ENCODE measurements at regions of chr11 and their contacts with region 1.

Region 1: DNA sequence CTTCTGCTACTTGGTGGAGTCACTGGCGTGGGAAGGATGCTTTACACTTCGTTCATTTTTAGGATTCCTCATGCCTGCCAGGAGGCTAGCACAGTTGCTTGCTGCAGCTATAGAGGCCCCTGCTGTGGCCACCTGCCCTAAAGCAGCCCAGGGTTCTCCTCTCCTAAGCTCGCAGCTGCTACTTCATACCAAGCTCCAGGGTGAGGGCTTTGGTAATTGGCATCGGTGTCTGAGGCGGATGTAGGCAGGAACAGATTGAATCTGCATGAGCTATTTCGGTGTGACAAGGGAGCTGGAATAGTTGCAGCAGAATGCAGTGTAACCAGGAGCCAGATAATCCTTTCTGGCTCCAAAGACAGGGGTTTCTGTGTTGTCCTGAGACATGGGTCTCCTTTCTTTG is 133.1 kb downstream of the MICAL2 start:
- DNase-seq: no peak
- H3K4me3 ChIP-seq: no peak overlapping the region
- H3K27ac ChIP-seq: no peak overlapping the region
- H3K4me1 ChIP-seq: no peaks in the 10 kb centered on the region
- H3K27me3 ChIP-seq: no peaks in the 10 kb centered on the region
- CTCF ChIP-seq: no peak
- POLR2A ChIP-seq: no peak

Region 2: DNA sequence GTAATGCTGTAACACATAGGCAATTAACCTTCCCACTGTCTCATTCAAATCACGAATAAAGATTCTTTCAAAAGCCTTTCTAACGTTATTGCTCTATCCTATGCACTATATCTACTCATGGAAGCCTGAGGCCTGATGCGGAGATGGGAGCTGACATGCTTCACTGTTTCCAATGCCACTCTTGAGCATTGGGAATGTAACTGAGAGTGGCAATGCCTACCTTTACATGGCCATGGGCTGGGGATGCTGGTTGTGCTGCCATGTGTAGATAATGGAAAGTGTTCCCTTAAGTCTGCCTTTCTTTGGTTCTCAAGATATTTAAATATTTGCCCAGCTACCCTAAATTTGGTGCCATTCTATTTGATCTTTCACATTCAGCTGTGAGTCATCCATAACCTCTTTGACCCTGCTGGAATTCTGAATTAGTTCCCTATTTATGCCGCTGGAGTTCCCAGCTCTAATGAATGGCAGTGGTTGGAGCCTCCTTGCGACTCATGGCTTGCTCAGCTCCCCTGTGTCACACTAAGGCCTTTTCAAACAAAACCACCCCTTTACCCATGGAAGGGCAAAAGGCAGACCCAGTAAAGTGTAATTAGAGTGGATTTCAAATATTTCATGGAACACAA is 213.6 kb before region 1 on chr11:
- intact Hi-C with region 1: no loop called
- DNase-seq: no peak
- H3K4me3 ChIP-seq: no peak overlapping the region
- H3K27ac ChIP-seq: no peak overlapping the region
- H3K4me1 ChIP-seq: no peaks in the 10 kb centered on the region
- H3K27me3 ChIP-seq: no peaks in the 10 kb centered on the region
- CTCF ChIP-seq: no peak
- POLR2A ChIP-seq: no peak

Region 3: DNA sequence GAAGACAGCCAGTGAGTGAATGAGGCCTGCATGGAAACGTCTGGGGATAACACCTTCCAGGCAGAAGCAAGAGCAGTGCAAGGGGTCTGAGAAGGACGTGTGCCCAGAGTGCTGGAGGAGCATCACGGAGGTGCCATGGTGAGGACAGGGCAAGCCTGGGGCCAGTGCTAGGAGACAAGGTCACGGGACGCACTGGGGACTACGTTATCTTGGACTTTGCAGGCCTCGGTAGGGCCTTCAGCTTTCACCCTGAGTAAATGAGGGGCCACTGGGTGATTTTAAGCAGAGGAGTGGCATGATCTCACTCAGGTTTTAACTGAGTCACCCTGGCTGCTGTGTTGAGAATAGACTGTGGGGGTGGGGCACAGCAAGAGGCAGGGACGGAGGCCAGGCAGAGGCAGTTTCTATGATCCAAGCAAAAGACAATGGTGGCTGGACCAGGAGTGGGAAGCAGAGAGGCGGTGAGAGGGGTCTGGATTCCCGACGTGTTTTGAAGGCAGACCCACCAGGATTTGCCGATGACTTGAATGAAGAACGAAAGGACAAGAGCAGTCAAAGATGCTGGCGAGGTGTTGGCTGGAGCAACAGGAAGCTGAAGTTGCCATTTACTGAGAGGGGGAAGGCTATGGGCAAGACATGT is 31.2 kb after region 1 on chr11:
- intact Hi-C with region 1: loop called (anchors 5 kb)
- DNase-seq: no peak
- H3K4me3 ChIP-seq: no peak overlapping the region
- H3K27ac ChIP-seq: no peak overlapping the region
- H3K4me1 ChIP-seq: no peaks in the 10 kb centered on the region
- H3K27me3 ChIP-seq: no peaks in the 10 kb centered on the region
- CTCF ChIP-seq: no peak
- POLR2A ChIP-seq: no peak

Region 4: GRCh38 chr11:12288212-12288930 is 44.9 kb after region 1 on chr11:
- intact Hi-C with region 1: no loop called
- DNase-seq: peak; percentile 62
- H3K4me3 ChIP-seq: no peak overlapping the region
- H3K27ac ChIP-seq: peak overlapping the region; percentile 0 to 43
- H3K4me1 ChIP-seq: no peaks in the 10 kb centered on the region
- H3K27me3 ChIP-seq: no peaks in the 10 kb centered on the region
- CTCF ChIP-seq: peak; percentile 63 to 80 (median 70)
- POLR2A ChIP-seq: no peak

Region 5: DNA sequence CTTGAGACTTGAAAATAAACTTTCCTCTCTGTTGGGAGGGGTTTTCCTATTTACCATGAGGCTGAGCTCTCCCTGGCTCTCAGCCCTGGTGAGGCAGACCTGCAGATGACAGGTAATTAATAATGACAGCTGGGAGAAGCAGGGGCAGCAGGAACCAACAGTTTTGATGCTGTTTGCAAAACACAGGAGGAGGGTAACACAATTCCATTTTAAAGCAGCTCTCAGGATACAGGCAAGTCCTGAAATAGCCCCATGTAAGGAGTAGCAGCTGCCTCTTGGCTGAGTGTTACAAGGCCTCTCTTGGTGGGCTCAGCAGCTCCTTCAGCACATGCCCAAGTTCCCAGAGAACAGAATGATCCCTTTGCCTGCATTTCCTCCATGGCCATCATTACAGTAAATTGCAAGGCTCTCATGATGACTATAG is 147.2 kb after region 1 on chr11:
- intact Hi-C with region 1: no loop called
- DNase-seq: no peak
- H3K4me3 ChIP-seq: no peak overlapping the region
- H3K27ac ChIP-seq: peak overlapping the region; percentile 53 to 66
- H3K4me1 ChIP-seq: peaks cover 18% of the 10 kb centered on the region
- H3K27me3 ChIP-seq: no peaks in the 10 kb centered on the region
- CTCF ChIP-seq: no peak
- POLR2A ChIP-seq: no peak

Region 6: DNA sequence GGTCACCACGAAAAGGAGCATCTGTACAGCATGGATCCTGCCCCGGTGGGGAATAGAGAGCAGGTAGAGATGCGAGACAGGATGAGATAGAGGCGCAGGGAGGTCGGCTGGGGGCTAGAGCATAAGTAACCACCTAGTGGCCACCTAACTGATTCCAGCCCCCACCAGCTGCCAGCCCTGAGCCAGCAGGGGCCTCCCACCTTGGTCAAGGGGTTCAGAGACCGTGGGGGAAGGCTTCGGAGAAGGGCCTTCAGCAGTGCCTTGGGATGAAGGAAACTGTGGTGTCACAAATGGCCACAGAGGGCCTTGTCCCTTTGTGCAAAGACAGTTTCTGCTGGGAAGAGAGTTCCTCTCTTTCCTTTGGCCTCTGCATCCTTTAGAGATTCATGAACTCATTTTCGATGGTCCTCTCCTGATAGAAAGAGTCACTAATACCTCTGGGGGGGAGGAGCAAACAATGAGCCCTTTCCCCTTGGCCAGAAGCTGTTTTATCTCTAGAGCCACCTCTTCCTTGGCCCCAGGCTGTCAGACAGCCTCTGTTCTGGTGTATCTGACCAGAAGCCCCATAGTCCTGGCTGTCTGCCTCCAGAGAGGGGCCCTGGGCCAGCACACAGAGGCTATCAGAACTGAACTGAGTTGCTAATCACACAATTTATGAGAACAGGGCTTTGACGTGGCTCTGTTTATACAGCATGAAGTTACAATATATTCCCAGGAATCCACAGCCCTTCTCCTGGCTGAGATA is 279.9 kb after region 1 on chr11:
- intact Hi-C with region 1: no loop called
- DNase-seq: no peak
- H3K4me3 ChIP-seq: no peak overlapping the region
- H3K27ac ChIP-seq: no peak overlapping the region
- H3K4me1 ChIP-seq: no peaks in the 10 kb centered on the region
- H3K27me3 ChIP-seq: no peaks in the 10 kb centered on the region
- CTCF ChIP-seq: no peak
- POLR2A ChIP-seq: no peak